H1 (cell line): ENCODE measurements at regions of chr1 and their contacts with region 1.

Region 1: GRCh38 chr1:44594871-44595746 is 79.2 kb downstream of the TMEM53 start:
- DNase-seq: peak; percentile 39 to 98
- H3K4me3 ChIP-seq: no peak overlapping the region
- H3K27ac ChIP-seq: no peak overlapping the region
- H3K4me1 ChIP-seq: peaks cover 12 to 23% (median 19%) of the 10 kb centered on the region in 4 experiments
- H3K27me3 ChIP-seq: no peaks in the 10 kb centered on the region
- CTCF ChIP-seq: peak; percentile 94 to 98 (median 96)
- EP300 ChIP-seq: no peak
- POLR2A ChIP-seq: no peak
- RAD21 ChIP-seq: peak; percentile 99

Region 2: DNA sequence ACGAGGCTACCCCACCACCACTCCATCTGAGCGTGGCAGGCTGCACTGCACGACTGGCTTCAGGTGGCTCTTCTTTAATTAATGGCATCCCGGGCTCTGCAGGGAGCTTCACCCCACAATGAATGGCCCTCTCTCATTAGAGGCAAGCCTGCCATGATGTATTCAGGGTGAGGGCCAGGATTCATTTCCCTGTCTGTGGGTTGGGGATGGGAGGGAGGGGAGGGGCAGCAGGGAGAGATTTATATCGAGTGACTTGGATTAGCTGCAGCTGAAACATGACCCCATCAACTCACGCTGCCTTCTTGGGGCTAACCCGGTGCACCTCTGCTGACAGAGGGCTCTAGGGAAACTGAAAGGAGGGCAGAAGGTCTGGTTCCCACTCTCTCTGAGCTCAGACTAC is 294.3 kb before region 1 on chr1:
- CTCF ChIA-PET with region 1: interaction called, 10 read pairs
- POLR2A ChIA-PET with region 1: no interaction called
- DNase-seq: no peak
- H3K4me3 ChIP-seq: no peak overlapping the region
- H3K27ac ChIP-seq: no peak overlapping the region
- H3K4me1 ChIP-seq: peaks cover 0 to 5% (median 0%) of the 10 kb centered on the region in 4 experiments; a peak in 3 of 7 replicates
- H3K27me3 ChIP-seq: no peaks in the 10 kb centered on the region
- CTCF ChIP-seq: no peak
- EP300 ChIP-seq: no peak
- POLR2A ChIP-seq: no peak
- RAD21 ChIP-seq: no peak

Region 3: GRCh38 chr1:44368471-44369151 is 226.5 kb before region 1 on chr1:
- CTCF ChIA-PET with region 1: interaction called, 112 read pairs
- POLR2A ChIA-PET with region 1: no interaction called
- DNase-seq: no peak
- H3K4me3 ChIP-seq: no peak overlapping the region
- H3K27ac ChIP-seq: no peak overlapping the region
- H3K4me1 ChIP-seq: peaks cover 0 to 7% (median 4%) of the 10 kb centered on the region in 4 experiments; a peak in 6 of 7 replicates
- H3K27me3 ChIP-seq: peaks cover 0 to 2% (median 0%) of the 10 kb centered on the region in 4 experiments; a peak in 3 of 7 replicates
- CTCF ChIP-seq: no peak
- EP300 ChIP-seq: no peak
- POLR2A ChIP-seq: no peak
- RAD21 ChIP-seq: no peak

Region 4: DNA sequence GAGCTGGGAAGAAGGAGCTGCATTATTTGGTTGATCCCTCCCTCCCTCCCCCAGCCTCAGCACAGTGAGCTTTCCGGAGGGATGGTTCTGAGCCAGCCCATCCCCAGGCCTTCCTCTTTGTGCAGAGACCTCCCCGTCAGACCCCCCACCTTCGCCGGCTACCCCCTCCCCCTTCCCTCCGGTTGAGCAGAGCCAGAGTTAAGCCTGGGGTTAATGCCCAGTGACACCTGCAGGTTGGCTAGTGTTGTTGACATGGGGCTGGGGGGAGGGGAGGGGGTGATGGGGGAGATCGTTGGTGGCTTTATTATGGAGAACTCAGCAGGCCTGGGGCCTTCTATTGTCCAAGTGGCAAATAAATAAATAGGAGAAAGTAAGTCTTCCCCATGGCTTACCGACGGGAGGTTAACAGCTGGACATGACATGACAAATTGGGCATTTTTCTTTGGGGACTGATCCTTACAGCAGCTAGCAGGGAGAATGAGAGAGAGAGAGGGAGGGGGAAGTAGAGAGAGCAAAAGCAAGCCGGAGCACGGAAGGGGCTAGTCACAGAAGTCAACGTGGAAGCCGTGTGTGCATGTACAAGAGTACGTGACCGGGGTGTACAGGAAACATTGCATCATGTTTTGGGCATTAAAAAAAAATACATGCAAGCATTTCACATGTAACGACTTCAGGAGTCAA is 51.9 kb before region 1 on chr1:
- CTCF ChIA-PET with region 1: interaction called, 78 read pairs
- POLR2A ChIA-PET with region 1: interaction called, 6 read pairs
- DNase-seq: peak; percentile 75 to 98
- H3K4me3 ChIP-seq: peak overlapping the region in 3 of 4 experiments; percentile 16 to 56 (median 26); a peak in 5 of 8 replicates
- H3K27ac ChIP-seq: peak overlapping the region; percentile 91
- H3K4me1 ChIP-seq: peaks cover 21 to 51% (median 39%) of the 10 kb centered on the region in 4 experiments
- H3K27me3 ChIP-seq: peaks cover 0 to 10% (median 2%) of the 10 kb centered on the region in 4 experiments; a peak in 2 of 7 replicates
- CTCF ChIP-seq: peak in 2 of 3 experiments; percentile 17 to 49; a peak in 2 of 4 replicates
- EP300 ChIP-seq: peak in 1 of 2 experiments; percentile 90; a peak in 1 of 3 replicates
- POLR2A ChIP-seq: peak in 1 of 2 experiments; percentile 47; a peak in 1 of 3 replicates
- RAD21 ChIP-seq: peak; percentile 61 to 66

Region 5: GRCh38 chr1:44571712-44572571 is 23.2 kb before region 1 on chr1:
- CTCF ChIA-PET with region 1: interaction called, 112 read pairs
- POLR2A ChIA-PET with region 1: no interaction called
- DNase-seq: no peak
- H3K4me3 ChIP-seq: no peak overlapping the region
- H3K27ac ChIP-seq: no peak overlapping the region
- H3K4me1 ChIP-seq: peaks cover 4 to 6% (median 5%) of the 10 kb centered on the region in 4 experiments; a peak in 6 of 7 replicates
- H3K27me3 ChIP-seq: no peaks in the 10 kb centered on the region
- CTCF ChIP-seq: peak in 2 of 3 experiments; percentile 39 to 68; a peak in 3 of 4 replicates
- EP300 ChIP-seq: no peak
- POLR2A ChIP-seq: no peak
- RAD21 ChIP-seq: peak; percentile 18 to 49; a peak in 2 of 4 replicates